ENCODE measurements at regions of chr7 and their contacts with region 1.

Region 1: GRCh38 chr7:135274495-135275268 is 41.0 kb downstream of the STRA8 start:
- DNase-seq: peak in 1 of 2 donors; percentile 75
- ATAC-seq: peak; percentile 73

Region 2: GRCh38 chr7:135083005-135083404 is 191.7 kb before region 1 on chr7:
- intact Hi-C with region 1: no loop called
- DNase-seq: no peak
- ATAC-seq: no peak

Region 3: DNA sequence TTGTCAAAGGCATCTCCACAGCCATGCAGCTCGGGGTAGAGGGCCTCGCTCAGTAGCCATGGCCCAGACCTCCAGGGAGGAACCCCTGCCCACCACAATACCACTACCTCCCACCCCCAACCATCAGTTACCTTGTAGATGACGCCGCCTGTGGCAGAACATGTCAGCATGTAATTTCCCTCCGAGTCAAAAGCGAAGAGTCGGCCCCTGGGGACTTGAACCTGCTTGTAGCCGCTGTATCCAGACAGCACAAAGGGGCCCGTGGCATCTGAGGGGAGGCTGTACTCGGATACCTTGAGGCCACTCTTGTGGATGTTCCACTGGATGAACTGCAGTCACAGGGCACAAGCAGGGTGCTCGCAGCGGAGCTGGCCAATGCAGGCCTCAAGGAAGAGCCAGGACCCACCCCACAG is 87.8 kb before region 1 on chr7:
- intact Hi-C with region 1: no loop called
- DNase-seq: no peak
- ATAC-seq: no peak

Region 4: GRCh38 chr7:135645296-135645904 is 370.7 kb after region 1 on chr7:
- intact Hi-C with region 1: loop called in 1 of 2 experiments (anchors 10 kb)
- DNase-seq: no peak
- ATAC-seq: peak; percentile 65

Measured in left colon (tissue), 2 donors.